MCF 10A (cell line): ENCODE measurements at regions of chr13 and their contacts with region 1.

Region 1: GRCh38 chr13:94192431-94192975 is 287.0 kb downstream of the DCT start:
- DNase-seq: peak; percentile 50
- H3K4me3 Mint-ChIP-seq: no peak overlapping the region
- H3K27ac Mint-ChIP-seq: peak overlapping the region; percentile 47
- H3K4me1 Mint-ChIP-seq: peaks cover 20% of the 10 kb centered on the region
- H3K27me3 Mint-ChIP-seq: no peaks in the 10 kb centered on the region
- CTCF ChIP-seq: peak; percentile 47

Region 2: GRCh38 chr13:92896842-92897241 is 1295.7 kb before region 1 on chr13:
- CTCF ChIA-PET with region 1: no interaction called
- POLR2A ChIA-PET with region 1: no interaction called
- intact Hi-C with region 1: loop called (anchors 10 kb)
- DNase-seq: peak; percentile 64
- H3K4me3 Mint-ChIP-seq: no peak overlapping the region
- H3K27ac Mint-ChIP-seq: no peak overlapping the region
- H3K4me1 Mint-ChIP-seq: peaks cover 13% of the 10 kb centered on the region
- H3K27me3 Mint-ChIP-seq: no peaks in the 10 kb centered on the region
- CTCF ChIP-seq: peak; percentile 28

Region 3: GRCh38 chr13:92967923-92968322 is 1224.6 kb before region 1 on chr13:
- CTCF ChIA-PET with region 1: no interaction called
- POLR2A ChIA-PET with region 1: no interaction called
- intact Hi-C with region 1: loop called (anchors 2 kb)
- DNase-seq: peak; percentile 53
- H3K4me3 Mint-ChIP-seq: no peak overlapping the region
- H3K27ac Mint-ChIP-seq: no peak overlapping the region
- H3K4me1 Mint-ChIP-seq: no peaks in the 10 kb centered on the region
- H3K27me3 Mint-ChIP-seq: no peaks in the 10 kb centered on the region
- CTCF ChIP-seq: peak; percentile 39

Region 4: GRCh38 chr13:93646245-93646644 is 546.3 kb before region 1 on chr13:
- CTCF ChIA-PET with region 1: no interaction called
- POLR2A ChIA-PET with region 1: no interaction called
- intact Hi-C with region 1: no loop called
- DNase-seq: no peak
- H3K4me3 Mint-ChIP-seq: no peak overlapping the region
- H3K27ac Mint-ChIP-seq: no peak overlapping the region
- H3K4me1 Mint-ChIP-seq: no peaks in the 10 kb centered on the region
- H3K27me3 Mint-ChIP-seq: no peaks in the 10 kb centered on the region
- CTCF ChIP-seq: no peak

Region 5: GRCh38 chr13:94073007-94073756 is 119.3 kb before region 1 on chr13:
- CTCF ChIA-PET with region 1: interaction called, 10 read pairs
- POLR2A ChIA-PET with region 1: no interaction called
- intact Hi-C with region 1: no loop called
- DNase-seq: peak; percentile 26
- H3K4me3 Mint-ChIP-seq: no peak overlapping the region
- H3K27ac Mint-ChIP-seq: peak overlapping the region; percentile 2
- H3K4me1 Mint-ChIP-seq: peaks cover 8% of the 10 kb centered on the region
- H3K27me3 Mint-ChIP-seq: no peaks in the 10 kb centered on the region
- CTCF ChIP-seq: no peak

Region 6: GRCh38 chr13:94173312-94173854 is 19.1 kb before region 1 on chr13:
- CTCF ChIA-PET with region 1: interaction called, 16 read pairs
- POLR2A ChIA-PET with region 1: no interaction called
- intact Hi-C with region 1: no loop called
- DNase-seq: no peak
- H3K4me3 Mint-ChIP-seq: no peak overlapping the region
- H3K27ac Mint-ChIP-seq: no peak overlapping the region
- H3K4me1 Mint-ChIP-seq: peaks cover 12% of the 10 kb centered on the region
- H3K27me3 Mint-ChIP-seq: no peaks in the 10 kb centered on the region
- CTCF ChIP-seq: peak; percentile 7

Region 7: DNA sequence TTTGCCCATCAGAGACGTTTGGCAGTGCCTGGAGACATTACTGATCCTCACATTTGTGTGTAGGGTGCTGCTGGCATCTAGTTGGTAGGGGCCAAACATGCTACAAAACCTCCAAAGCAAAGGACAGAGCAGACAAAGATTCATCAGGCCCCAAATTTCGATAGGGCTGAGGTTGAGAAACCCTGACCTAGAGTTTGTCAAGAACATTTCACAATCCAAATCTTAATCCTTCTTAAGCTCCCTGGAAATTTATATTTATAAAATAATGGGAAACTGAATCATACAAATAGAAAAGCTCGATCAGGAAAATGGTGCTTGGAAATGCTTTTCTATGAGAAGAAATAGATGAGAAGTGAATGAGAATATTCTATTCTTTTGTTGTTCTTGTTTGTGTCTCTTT is 13.4 kb after region 1 on chr13:
- CTCF ChIA-PET with region 1: interaction called, 12 read pairs
- POLR2A ChIA-PET with region 1: no interaction called
- intact Hi-C with region 1: no loop called
- DNase-seq: no peak
- H3K4me3 Mint-ChIP-seq: no peak overlapping the region
- H3K27ac Mint-ChIP-seq: no peak overlapping the region
- H3K4me1 Mint-ChIP-seq: no peaks in the 10 kb centered on the region
- H3K27me3 Mint-ChIP-seq: no peaks in the 10 kb centered on the region
- CTCF ChIP-seq: no peak

Region 8: DNA sequence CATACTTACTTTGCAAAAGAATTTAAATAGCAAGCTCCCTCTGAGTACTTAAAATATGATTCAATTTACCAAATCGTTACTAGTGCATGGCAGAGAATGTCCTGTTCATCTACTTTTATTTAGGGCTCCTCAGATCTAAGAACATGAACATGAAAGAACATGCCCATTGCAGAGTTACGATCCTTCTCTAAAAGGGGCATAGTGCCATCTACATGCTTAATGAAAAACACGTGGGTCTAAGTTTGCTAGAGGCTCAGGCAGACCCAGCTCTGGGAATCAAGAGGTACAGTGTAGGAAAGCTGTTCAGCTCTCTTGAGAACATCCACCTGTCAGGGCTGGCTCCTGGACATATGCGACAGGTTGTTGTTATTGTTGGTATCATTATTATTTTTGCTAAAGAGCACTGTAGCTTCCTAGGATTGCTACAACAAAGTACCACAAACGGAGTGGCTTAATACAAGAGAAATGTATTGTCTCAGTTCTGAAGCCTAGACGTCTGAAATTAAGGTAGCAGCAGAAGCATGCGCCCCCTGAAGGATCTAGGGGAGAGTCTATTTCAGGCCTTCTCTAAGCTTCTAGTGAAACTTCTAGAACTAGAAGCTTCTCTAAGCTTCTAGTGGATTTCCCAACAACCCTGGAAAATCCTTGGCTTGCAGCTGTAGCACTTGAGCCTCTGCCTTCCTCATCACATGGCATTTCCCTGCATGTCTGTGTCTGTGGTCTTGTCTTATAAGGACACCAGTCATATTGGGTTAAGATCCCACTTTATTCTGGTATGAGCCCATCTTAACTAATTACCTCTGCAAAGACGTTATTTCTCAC is 153.1 kb after region 1 on chr13:
- CTCF ChIA-PET with region 1: no interaction called
- POLR2A ChIA-PET with region 1: no interaction called
- intact Hi-C with region 1: loop called (anchors 10 kb)
- DNase-seq: peak; percentile 74
- H3K4me3 Mint-ChIP-seq: no peak overlapping the region
- H3K27ac Mint-ChIP-seq: peak overlapping the region; percentile 88
- H3K4me1 Mint-ChIP-seq: peaks cover 14% of the 10 kb centered on the region
- H3K27me3 Mint-ChIP-seq: no peaks in the 10 kb centered on the region
- CTCF ChIP-seq: peak; percentile 21